ENCODE measurements at regions of chr1 and their contacts with region 1.

Region 1: DNA sequence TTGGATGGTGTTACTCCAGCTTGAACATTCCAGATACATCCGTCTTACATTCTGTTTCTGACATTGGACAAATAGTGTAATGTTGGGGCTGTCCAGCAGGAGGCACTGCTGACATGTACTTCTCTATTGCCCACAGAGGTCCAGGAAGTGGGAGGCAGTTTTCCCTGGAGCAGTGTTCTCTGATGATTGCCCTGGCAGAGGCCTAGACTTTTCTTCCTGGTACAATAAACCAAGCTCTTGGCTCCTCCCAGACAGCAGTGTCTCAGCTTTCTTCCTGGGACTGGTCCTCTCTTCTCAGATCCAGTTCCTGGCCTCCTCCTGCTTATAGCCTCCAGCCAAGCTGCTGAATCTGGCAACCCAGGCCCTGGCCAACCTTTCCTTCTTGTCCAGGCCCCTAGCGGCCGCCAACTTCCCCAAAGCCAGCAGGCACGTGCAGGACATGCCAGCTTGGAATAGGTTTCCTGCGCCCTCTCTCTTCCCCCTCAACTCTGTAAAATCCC is 14.9 kb upstream of the IFNLR1 start:
- DNase-seq: peak; percentile 56 to 93
- H3K4me3 ChIP-seq: no peak overlapping the region
- H3K27ac ChIP-seq: no peak overlapping the region
- H3K4me1 ChIP-seq: peaks cover 0 to 4% (median 2%) of the 10 kb centered on the region in 4 experiments; a peak in 2 of 7 replicates
- H3K27me3 ChIP-seq: no peaks in the 10 kb centered on the region
- CTCF ChIP-seq: peak; percentile 66 to 91 (median 83)
- EP300 ChIP-seq: no peak
- POLR2A ChIP-seq: no peak
- RAD21 ChIP-seq: peak; percentile 94 to 95

Region 2: GRCh38 chr1:24070821-24071393 is 131.1 kb before region 1 on chr1:
- CTCF ChIA-PET with region 1: interaction called, 26 read pairs
- POLR2A ChIA-PET with region 1: no interaction called
- DNase-seq: peak; percentile 53 to 91
- H3K4me3 ChIP-seq: peak overlapping the region in 2 of 4 experiments; percentile 29 to 42; a peak in 3 of 8 replicates
- H3K27ac ChIP-seq: no peak overlapping the region
- H3K4me1 ChIP-seq: peaks cover 0 to 3% (median under 1%) of the 10 kb centered on the region in 4 experiments; a peak in 4 of 7 replicates
- H3K27me3 ChIP-seq: no peaks in the 10 kb centered on the region; a peak in 1 of 7 replicates
- CTCF ChIP-seq: peak; percentile 90 to 94 (median 94)
- EP300 ChIP-seq: 0 out of 3 replicates have a peak, but pooled peaks of 1 of the 2 experiments have one; percentile 7
- POLR2A ChIP-seq: no peak
- RAD21 ChIP-seq: peak; percentile 86 to 93

Region 3: GRCh38 chr1:24222008-24222842 is 20.2 kb after region 1 on chr1:
- CTCF ChIA-PET with region 1: interaction called, 23 read pairs
- POLR2A ChIA-PET with region 1: no interaction called
- DNase-seq: no peak
- H3K4me3 ChIP-seq: no peak overlapping the region
- H3K27ac ChIP-seq: no peak overlapping the region
- H3K4me1 ChIP-seq: no peaks in the 10 kb centered on the region; a peak in 1 of 7 replicates
- H3K27me3 ChIP-seq: no peaks in the 10 kb centered on the region; a peak in 1 of 7 replicates
- CTCF ChIP-seq: no peak
- EP300 ChIP-seq: no peak
- POLR2A ChIP-seq: no peak
- RAD21 ChIP-seq: no peak

Region 4: GRCh38 chr1:24277420-24278169 is 75.6 kb after region 1 on chr1:
- CTCF ChIA-PET with region 1: interaction called, 27 read pairs
- POLR2A ChIA-PET with region 1: no interaction called
- DNase-seq: no peak
- H3K4me3 ChIP-seq: no peak overlapping the region
- H3K27ac ChIP-seq: no peak overlapping the region
- H3K4me1 ChIP-seq: no peaks in the 10 kb centered on the region
- H3K27me3 ChIP-seq: no peaks in the 10 kb centered on the region
- CTCF ChIP-seq: no peak
- EP300 ChIP-seq: no peak
- POLR2A ChIP-seq: no peak
- RAD21 ChIP-seq: no peak

Region 5: DNA sequence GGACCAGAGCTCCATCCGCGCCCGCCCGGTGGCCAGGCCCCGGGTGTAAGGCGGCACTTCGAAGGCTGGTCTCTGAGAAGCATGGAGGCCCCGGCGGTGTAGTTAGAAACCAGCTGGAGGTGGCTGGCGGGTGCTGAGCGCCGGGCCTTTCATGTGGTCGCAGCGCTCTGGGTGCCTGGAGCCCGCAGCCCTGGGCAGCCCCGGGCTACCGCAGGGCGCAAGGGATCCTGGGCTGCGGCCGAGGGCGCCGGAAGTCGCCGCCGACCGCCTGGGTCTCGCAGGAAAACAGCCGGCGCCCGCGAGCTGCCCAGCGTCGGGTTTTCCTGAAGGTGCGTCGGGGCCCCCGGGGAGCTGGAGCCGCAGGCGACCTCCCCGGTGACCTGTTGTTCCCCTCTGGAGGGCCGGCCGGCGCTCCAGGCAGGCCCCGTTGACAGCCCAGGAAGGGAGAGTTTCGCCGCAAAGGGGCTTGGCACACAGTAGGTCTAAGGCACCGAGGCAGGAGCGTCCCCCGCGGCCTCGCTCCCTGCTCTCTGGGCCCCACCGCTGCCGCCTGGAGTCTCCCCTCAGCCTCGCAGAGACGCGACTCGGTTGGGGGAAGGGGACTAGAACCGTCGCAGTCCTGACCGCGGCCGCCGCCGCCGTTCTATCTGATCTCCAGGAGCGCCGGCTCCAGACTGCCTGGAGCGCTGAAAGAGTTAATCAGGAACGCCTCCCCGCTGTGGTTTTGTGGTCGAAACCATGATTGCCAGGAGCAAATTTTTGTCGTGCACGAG is 119.9 kb after region 1 on chr1:
- CTCF ChIA-PET with region 1: interaction called, 60 read pairs
- POLR2A ChIA-PET with region 1: interaction called, 3 read pairs
- DNase-seq: no peak
- H3K4me3 ChIP-seq: peak overlapping the region; percentile 45 to 68 (median 56)
- H3K27ac ChIP-seq: no peak overlapping the region
- H3K4me1 ChIP-seq: peaks cover 8 to 22% (median 13%) of the 10 kb centered on the region in 4 experiments
- H3K27me3 ChIP-seq: peaks cover 0 to 42% (median 38%) of the 10 kb centered on the region in 4 experiments; a peak in 6 of 7 replicates
- CTCF ChIP-seq: no peak; a peak in 1 of 4 replicates
- EP300 ChIP-seq: no peak
- POLR2A ChIP-seq: no peak
- RAD21 ChIP-seq: no peak; a peak in 1 of 4 replicates

Region 6: DNA sequence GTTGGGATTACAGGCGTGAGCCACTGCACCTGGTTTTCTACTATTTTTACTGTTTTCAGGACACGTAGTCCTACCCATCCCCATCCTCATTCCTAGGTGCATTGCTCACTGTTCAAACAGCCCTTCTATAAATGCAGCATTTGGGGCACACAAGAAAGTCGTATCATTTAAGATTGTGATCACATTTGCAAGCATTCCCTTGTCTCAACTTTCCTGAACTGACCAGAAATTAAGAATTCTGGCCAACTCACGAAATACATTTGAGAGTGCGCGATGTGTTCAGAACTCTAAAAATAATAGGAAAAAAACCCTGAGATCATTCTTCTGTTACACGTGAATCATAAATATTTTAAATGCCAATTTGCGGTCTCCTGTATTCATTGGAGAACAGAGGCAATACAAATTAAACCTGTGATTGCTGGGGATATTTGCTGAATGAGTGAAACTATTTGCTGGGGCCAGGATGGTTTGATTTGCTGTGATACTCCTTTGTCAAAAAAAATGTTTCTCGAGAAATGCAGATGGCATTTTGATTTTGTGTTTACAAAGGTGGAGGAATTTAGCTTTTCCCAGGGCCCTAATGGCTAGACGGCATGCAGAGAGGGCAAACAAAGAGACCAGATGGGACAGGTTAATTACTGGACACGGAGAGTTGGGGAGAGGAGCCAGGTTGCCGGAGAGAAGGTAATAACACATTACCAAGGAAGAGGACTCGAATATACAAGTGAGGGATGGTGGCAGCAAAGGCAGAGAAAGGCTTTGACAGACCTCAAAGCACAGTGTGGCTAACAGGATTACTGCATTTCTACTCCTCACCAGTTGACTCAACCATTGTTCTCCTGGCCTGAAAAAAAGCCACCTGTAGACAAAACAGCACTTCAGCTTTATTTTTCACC is 173.1 kb after region 1 on chr1:
- CTCF ChIA-PET with region 1: interaction called, 233 read pairs
- POLR2A ChIA-PET with region 1: no interaction called
- DNase-seq: peak in 1 of 2 experiments; percentile 41
- H3K4me3 ChIP-seq: no peak overlapping the region
- H3K27ac ChIP-seq: no peak overlapping the region
- H3K4me1 ChIP-seq: peaks cover 0 to 13% (median 6%) of the 10 kb centered on the region in 4 experiments; a peak in 3 of 7 replicates
- H3K27me3 ChIP-seq: no peaks in the 10 kb centered on the region
- CTCF ChIP-seq: no peak
- EP300 ChIP-seq: 0 out of 3 replicates have a peak, but pooled peaks of 1 of the 2 experiments have one; percentile 68
- POLR2A ChIP-seq: no peak
- RAD21 ChIP-seq: no peak

Region 7: GRCh38 chr1:24502709-24503058 is 300.7 kb after region 1 on chr1 and contains the start of gene RCAN3:
- CTCF ChIA-PET with region 1: no interaction called
- POLR2A ChIA-PET with region 1: no interaction called
- DNase-seq: peak; percentile 59 to 88
- H3K4me3 ChIP-seq: peak within 1 kb of the TSS; percentile 80 to 95 (median 86)
- H3K27ac ChIP-seq: no peak within 1 kb of the TSS
- H3K4me1 ChIP-seq: peaks cover 2 to 21% (median 11%) of the 10 kb centered on the region in 4 experiments; a peak in 6 of 7 replicates
- H3K27me3 ChIP-seq: peaks cover 0 to 7% (median 0%) of the 10 kb centered on the region in 4 experiments; a peak in 3 of 7 replicates
- CTCF ChIP-seq: no peak
- EP300 ChIP-seq: no peak
- POLR2A ChIP-seq: peak in 1 of 2 experiments; percentile 38; a peak in 1 of 3 replicates
- RAD21 ChIP-seq: no peak
- total RNA-seq, gene RCAN3: 15.2 and 16.6 TPM in 2 replicates

Region 8: DNA sequence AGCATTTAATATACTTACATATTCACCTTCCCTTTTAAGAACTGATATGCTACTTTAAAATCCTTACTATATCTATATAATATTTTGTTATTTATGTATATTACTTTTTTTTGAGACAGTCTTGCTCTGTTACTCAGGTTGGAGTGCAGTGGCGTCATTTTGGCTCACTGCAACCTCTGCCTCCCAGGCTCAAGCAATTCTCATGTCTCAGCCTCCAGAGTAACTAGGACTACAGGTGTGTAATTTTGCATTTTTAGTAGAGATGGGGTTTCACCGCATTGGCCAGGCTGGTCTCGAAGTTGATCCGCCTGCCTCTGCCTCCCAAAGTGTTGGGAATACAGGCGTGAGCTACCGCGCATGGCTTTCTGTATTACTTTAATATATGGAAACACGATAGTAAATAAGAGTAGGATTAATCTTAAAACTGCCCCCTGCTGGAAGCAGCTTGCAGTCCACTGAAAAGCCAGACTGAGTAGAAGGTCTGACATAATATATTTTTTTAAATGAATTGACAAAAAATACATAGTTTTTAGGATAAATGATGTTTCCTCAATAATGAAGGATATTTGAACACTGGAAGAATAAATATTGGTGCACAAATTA is 325.1 kb after region 1 on chr1:
- CTCF ChIA-PET with region 1: interaction called, 10 read pairs
- POLR2A ChIA-PET with region 1: no interaction called
- DNase-seq: no peak
- H3K4me3 ChIP-seq: no peak overlapping the region
- H3K27ac ChIP-seq: no peak overlapping the region
- H3K4me1 ChIP-seq: no peaks in the 10 kb centered on the region
- H3K27me3 ChIP-seq: no peaks in the 10 kb centered on the region; a peak in 1 of 7 replicates
- CTCF ChIP-seq: peak in 2 of 3 experiments; percentile 36 to 41; a peak in 2 of 4 replicates
- EP300 ChIP-seq: no peak
- POLR2A ChIP-seq: no peak
- RAD21 ChIP-seq: peak; percentile 27 to 39; a peak in 3 of 4 replicates

Measured in H1 (cell line).